ENCODE measurements at regions of chr3 and their contacts with region 1.

Region 1: GRCh38 chr3:170021083-170021482 is 16.7 kb upstream of the GPR160 start:
- DNase-seq: no peak
- H3K4me3 ChIP-seq: no peak overlapping the region
- H3K27ac ChIP-seq: no peak overlapping the region
- H3K4me1 ChIP-seq: no peaks in the 10 kb centered on the region
- H3K27me3 ChIP-seq: no peaks in the 10 kb centered on the region
- CTCF ChIP-seq: peak in 2 of 3 experiments; percentile 29 to 35; a peak in 2 of 4 replicates
- EP300 ChIP-seq: no peak
- POLR2A ChIP-seq: no peak
- RAD21 ChIP-seq: peak; percentile 53 to 54

Region 2: DNA sequence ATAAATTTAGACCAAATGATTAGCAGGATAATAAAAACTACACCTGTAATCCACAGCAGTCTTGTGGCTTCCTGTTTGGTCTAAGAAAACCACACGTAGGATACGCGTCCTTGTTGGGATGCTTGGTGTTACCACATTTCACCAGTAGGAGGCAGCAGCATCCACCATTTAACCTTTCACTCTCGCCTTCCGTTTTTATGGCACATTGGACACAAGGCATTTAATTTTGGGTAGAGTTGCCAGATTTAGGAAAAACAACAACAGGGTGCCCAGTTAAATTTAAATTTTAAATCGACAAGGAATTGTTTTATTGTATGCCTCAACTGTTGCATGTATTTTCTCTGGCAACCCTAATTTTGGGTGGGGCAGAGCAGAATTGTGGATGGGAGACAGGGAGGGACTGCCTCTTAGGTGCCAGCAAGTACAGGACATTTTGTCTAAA is 157.6 kb before region 1 on chr3:
- CTCF ChIA-PET with region 1: interaction called, 23 read pairs
- POLR2A ChIA-PET with region 1: no interaction called
- DNase-seq: peak; percentile 58 to 87
- H3K4me3 ChIP-seq: no peak overlapping the region
- H3K27ac ChIP-seq: no peak overlapping the region
- H3K4me1 ChIP-seq: peaks cover 2 to 5% (median 4%) of the 10 kb centered on the region in 4 experiments; a peak in 5 of 7 replicates
- H3K27me3 ChIP-seq: no peaks in the 10 kb centered on the region
- CTCF ChIP-seq: peak; percentile 62 to 95 (median 78)
- EP300 ChIP-seq: no peak
- POLR2A ChIP-seq: no peak
- RAD21 ChIP-seq: peak; percentile 93 to 96

Region 3: DNA sequence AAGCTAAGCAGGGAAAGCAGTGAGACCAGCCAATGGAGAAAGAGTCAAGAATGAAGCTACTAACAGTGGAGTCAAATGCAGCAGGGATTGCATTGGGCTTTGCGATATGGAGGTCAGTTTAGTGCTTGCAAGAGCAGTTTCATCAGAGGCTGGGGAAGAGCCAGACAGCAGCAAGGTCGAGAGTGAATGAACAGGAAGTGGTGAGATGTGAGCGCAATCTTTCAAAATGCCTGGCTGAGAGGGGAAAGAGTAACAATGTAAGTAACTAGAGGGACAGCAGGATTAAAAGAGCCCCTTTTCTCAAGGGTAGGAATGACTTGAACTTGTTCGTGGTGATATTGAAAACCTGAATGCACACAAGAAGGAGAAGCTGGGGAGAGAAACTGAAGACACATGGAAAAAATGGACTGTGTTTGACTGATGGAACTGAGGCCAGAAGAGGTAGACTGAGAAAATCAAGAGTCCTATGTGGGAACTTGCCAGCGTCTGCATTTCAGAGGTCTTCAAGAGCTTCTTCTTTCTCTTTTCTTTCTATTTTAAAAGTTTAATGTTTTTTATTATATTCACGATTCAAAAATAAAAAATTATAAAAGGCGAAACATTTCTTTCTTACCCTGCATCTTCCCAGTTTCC is 13.9 kb before region 1 on chr3:
- CTCF ChIA-PET with region 1: interaction called, 42 read pairs
- POLR2A ChIA-PET with region 1: no interaction called
- DNase-seq: no peak
- H3K4me3 ChIP-seq: no peak overlapping the region
- H3K27ac ChIP-seq: no peak overlapping the region
- H3K4me1 ChIP-seq: no peaks in the 10 kb centered on the region
- H3K27me3 ChIP-seq: no peaks in the 10 kb centered on the region
- CTCF ChIP-seq: no peak
- EP300 ChIP-seq: no peak
- POLR2A ChIP-seq: no peak
- RAD21 ChIP-seq: no peak

Region 4: DNA sequence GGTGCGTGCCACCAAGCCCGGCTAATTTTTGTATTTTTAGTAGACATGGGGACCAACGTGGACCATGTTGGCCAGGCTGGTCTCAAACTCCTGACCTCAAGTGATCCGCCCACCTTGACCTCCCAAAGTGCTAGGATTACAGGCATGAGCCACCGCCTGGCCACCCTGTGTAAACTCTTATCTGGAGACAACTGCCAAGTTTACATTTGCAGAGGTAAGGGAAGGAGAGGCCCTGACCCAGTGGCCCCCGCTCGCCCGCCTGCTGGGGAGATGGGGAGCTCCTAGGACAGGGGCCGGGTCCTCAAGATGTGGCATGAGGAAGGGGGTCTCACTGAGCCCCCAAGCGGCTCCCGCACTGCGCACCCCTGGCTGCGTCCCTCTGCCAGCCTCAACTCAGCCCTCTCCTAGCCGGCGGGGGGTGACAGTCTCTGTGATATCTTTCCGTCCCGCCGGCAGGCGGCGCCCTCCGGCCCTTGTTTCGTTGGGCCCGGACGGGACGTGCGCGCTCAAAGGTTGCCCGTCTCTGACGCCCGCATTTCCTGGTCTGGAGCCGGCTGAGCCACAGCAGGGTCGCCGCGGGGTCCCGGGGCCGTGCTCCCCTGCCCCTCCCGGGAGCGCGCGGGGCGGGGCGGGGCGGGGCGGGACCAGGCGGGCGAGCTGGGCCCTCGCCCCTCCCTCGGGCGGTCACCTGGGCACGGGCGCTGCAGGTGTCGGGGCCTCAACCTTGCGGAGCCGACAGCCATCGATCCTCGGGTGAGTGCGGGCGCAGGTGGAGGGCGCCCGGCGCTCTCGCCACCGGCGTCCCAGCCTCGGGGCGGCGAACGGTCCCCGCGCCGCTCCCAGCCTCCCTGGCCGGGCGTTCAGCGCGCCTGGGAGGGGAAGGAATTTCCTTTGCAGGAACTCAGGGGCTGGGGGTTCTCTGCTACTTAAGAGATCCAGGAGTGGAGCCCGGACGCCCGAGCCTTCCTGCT is 16.7 kb after region 1 on chr3 and contains the start of gene GPR160:
- CTCF ChIA-PET with region 1: interaction called, 17 read pairs
- POLR2A ChIA-PET with region 1: no interaction called
- DNase-seq: peak; percentile 54 to 97
- H3K4me3 ChIP-seq: peak within 1 kb of the TSS; percentile 54 to 81 (median 76)
- H3K27ac ChIP-seq: no peak within 1 kb of the TSS
- H3K4me1 ChIP-seq: peaks cover 0 to 7% (median 5%) of the 10 kb centered on the region in 4 experiments; a peak in 4 of 7 replicates
- H3K27me3 ChIP-seq: no peaks in the 10 kb centered on the region
- CTCF ChIP-seq: peak; percentile 78 to 85 (median 83)
- EP300 ChIP-seq: no peak
- POLR2A ChIP-seq: no peak
- RAD21 ChIP-seq: peak; percentile 39 to 68; a peak in 3 of 4 replicates
- total RNA-seq, gene GPR160: 16.6 and 16.7 TPM in 2 replicates